Activated CD4-positive, alpha-beta T cell treated with anti-CD3 and anti-CD28 coated beads, Interleukin-2, amount 10 ng/mL, durations not matched to agents 24 days and 14 days (primary cell): ENCODE measurements at regions of chr17 and their contacts with region 1.

Region 1: GRCh38 chr17:17752089-17752820 is 71.0 kb downstream of the RAI1 start:
- DNase-seq: peak; percentile 99
- H3K4me3 Mint-ChIP-seq: peak overlapping the region; percentile 93
- H3K27ac Mint-ChIP-seq: peak overlapping the region; percentile 95
- H3K4me1 Mint-ChIP-seq: peaks cover 44% of the 10 kb centered on the region
- H3K27me3 Mint-ChIP-seq: no peaks in the 10 kb centered on the region

Region 2: DNA sequence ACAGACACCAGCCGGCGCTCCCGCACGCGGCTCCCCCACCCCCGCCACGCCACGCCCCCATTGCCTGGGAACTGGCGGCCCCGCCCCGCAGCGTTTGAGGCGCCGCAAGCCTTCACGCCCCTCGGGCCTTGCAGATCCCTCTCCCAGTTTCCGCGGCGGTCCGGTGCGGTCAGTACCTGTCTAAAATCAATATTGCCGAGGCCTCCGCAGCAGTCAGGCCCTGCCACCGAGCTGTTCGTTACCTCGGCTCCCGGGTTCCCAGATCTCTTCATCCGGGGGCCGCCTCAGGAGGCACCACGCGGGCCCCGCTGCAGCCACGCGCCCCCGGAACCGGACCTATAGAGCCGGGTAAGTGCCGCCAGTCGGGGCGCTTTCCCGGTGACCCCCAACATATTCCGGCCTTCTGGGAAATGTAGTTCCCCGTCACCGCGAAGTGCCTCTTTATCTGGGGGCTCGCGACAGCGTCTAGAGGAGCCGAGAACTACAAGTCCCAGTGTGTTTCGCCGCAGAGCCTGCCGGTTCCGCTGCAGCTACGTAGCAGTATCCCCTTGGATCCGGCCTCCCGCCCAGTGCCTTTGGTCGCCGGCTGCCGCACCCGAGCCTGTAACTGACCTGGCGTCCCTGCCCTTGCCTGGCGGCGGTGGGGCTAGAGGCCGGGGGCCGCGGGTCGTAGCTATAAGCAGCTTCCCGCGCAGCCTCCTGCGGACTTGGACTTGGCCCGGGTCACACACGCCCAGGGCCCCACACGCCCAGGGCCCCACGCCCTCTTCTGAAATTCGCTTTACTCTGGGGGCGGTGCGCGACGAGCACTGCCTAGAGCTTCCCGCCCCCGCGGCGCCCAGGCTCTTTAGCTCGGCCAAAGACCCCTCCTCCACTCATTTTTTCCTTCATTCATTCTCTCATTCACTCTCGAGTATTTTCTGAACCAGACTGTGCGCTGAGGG is 160.6 kb before region 1 on chr17 and contains the start of gene PEMT:
- intact Hi-C with region 1: loop called (anchors 5 kb)
- DNase-seq: peak; percentile 98
- H3K4me3 Mint-ChIP-seq: peak within 1 kb of the TSS; percentile 92
- H3K27ac Mint-ChIP-seq: peak within 1 kb of the TSS; percentile 96
- H3K4me1 Mint-ChIP-seq: peaks cover 18% of the 10 kb centered on the region
- H3K27me3 Mint-ChIP-seq: no peaks in the 10 kb centered on the region
- total RNA-seq, gene PEMT: 43.6 and 45.5 TPM in 2 replicates

Region 3: DNA sequence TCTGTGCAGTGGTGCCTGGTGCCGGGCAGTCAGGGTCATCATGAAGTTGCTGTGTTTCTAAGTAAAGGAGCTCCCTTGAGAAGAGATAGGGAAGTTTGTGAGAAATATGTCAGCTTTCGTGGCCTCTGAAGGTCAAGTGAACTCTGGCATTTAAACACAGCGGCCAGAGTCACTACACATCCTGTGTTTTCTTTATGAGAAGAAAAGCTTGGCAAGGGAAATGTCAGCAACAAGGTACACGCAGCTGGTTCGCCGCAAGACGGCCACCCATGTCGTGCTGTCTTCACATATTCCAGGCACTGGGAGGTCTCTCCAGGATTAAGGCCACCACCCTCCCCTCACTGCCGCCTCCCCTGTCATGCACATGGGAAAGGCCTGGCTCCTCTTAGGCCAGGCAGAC is 127.5 kb before region 1 on chr17:
- intact Hi-C with region 1: no loop called
- DNase-seq: no peak
- H3K4me3 Mint-ChIP-seq: no peak overlapping the region
- H3K27ac Mint-ChIP-seq: no peak overlapping the region
- H3K4me1 Mint-ChIP-seq: peaks cover 11% of the 10 kb centered on the region
- H3K27me3 Mint-ChIP-seq: peaks cover 7% of the 10 kb centered on the region

Region 4: GRCh38 chr17:17783116-17783824 is 31.0 kb after region 1 on chr17:
- intact Hi-C with region 1: loop called (anchors 2 kb)
- DNase-seq: peak; percentile 90
- H3K4me3 Mint-ChIP-seq: peak overlapping the region; percentile 80
- H3K27ac Mint-ChIP-seq: no peak overlapping the region
- H3K4me1 Mint-ChIP-seq: peaks cover 10% of the 10 kb centered on the region
- H3K27me3 Mint-ChIP-seq: peaks cover 16% of the 10 kb centered on the region

Region 5: DNA sequence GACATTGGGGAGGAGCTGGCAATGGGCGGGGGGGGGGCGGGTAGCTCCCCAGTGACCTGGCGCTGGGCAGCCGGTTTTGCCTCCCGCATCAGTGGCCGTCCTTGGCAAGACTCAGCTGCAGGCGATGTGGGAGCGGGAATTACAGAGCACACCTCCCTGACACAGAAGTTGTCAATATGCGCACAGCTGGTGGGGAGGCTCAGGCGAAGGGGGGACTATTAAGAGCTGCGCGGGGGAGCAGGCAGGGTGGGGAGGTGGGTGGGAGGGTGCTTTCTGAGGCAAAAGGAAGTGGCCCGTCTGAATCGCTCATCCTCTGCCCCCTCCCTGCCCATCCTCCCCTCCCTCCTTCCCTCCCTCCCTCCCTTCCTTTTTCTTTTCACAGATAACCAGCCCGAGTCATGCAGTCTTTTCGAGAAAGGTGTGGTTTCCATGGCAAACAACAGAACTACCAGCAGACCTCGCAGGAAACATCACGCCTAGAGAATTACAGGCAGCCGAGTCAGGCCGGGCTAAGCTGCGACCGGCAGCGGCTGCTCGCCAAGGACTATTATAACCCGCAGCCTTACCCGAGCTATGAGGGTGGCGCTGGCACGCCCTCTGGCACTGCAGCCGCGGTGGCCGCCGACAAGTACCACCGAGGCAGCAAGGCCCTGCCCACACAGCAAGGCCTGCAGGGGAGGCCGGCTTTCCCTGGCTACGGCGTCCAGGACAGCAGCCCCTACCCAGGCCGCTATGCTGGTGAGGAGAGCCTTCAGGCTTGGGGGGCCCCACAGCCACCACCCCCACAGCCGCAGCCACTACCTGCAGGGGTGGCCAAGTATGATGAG is 40.5 kb after region 1 on chr17:
- intact Hi-C with region 1: loop called (anchors 2 kb)
- DNase-seq: peak; percentile 92
- H3K4me3 Mint-ChIP-seq: peak overlapping the region; percentile 58
- H3K27ac Mint-ChIP-seq: peak overlapping the region; percentile 74
- H3K4me1 Mint-ChIP-seq: peaks cover 17% of the 10 kb centered on the region
- H3K27me3 Mint-ChIP-seq: no peaks in the 10 kb centered on the region

Region 6: DNA sequence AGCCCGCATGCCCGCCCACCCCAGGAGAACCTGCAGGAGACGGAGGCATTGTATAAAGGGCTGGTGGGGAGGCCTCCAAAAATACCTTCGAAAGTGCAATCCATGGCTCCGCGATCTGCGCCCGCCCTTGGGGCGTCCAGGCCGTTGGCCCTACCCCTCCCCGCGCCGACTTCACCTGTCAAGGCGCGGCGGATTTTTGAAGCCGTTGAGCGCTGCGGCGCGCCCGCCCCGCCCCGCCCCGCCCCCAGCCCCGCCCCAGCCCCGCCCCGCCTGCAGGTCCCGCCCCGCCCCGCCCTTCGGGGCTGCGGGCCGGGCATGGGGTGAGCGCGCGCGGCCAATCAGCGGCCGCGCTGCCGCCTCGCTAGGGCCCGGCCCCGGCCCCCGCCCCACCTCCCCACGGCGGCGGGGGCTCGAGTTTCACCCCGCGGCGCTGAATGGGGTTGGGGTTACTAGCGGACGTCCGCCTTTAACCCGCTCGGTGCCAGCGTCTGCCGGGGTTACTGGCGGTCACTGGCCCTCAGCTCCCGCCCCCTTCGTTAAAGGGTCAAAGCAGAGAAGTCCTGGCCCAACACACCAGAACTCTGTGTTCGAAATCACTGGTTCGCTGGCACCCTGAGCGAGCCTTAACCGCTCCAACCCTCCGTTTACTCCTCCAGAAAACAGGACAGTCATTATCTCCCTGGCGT is 71.3 kb after region 1 on chr17:
- intact Hi-C with region 1: loop called (anchors 5 kb)
- DNase-seq: peak; percentile 95
- H3K4me3 Mint-ChIP-seq: peak overlapping the region; percentile 85
- H3K27ac Mint-ChIP-seq: peak overlapping the region; percentile 93
- H3K4me1 Mint-ChIP-seq: peaks cover 84% of the 10 kb centered on the region
- H3K27me3 Mint-ChIP-seq: no peaks in the 10 kb centered on the region

Region 7: GRCh38 chr17:17836250-17836817 is 84.1 kb after region 1 on chr17:
- intact Hi-C with region 1: loop called (anchors 1 kb)
- DNase-seq: peak; percentile 99
- H3K4me3 Mint-ChIP-seq: peak overlapping the region; percentile 98
- H3K27ac Mint-ChIP-seq: peak overlapping the region; percentile 95
- H3K4me1 Mint-ChIP-seq: peaks cover 68% of the 10 kb centered on the region
- H3K27me3 Mint-ChIP-seq: no peaks in the 10 kb centered on the region